ENCODE measurements at regions of chr11 and their contacts with region 1.

Region 1: GRCh38 chr11:96342961-96343711 is at the start of gene MAML2:
- DNase-seq: peak; percentile 93
- H3K4me3 Mint-ChIP-seq: peak within 1 kb of the TSS; percentile 96
- H3K27ac Mint-ChIP-seq: peak within 1 kb of the TSS; percentile 88
- H3K4me1 Mint-ChIP-seq: peaks cover 25% of the 10 kb centered on the region
- H3K27me3 Mint-ChIP-seq: no peaks in the 10 kb centered on the region
- total RNA-seq, gene MAML2: 23.4 to 27.2 TPM

Region 2: GRCh38 chr11:95884376-95884775 is 458.8 kb before region 1 on chr11:
- CTCF ChIA-PET with region 1: no interaction called
- POLR2A ChIA-PET with region 1: no interaction called
- DNase-seq: no peak
- H3K4me3 Mint-ChIP-seq: no peak overlapping the region
- H3K27ac Mint-ChIP-seq: no peak overlapping the region
- H3K4me1 Mint-ChIP-seq: peaks cover 5% of the 10 kb centered on the region
- H3K27me3 Mint-ChIP-seq: no peaks in the 10 kb centered on the region

Region 3: DNA sequence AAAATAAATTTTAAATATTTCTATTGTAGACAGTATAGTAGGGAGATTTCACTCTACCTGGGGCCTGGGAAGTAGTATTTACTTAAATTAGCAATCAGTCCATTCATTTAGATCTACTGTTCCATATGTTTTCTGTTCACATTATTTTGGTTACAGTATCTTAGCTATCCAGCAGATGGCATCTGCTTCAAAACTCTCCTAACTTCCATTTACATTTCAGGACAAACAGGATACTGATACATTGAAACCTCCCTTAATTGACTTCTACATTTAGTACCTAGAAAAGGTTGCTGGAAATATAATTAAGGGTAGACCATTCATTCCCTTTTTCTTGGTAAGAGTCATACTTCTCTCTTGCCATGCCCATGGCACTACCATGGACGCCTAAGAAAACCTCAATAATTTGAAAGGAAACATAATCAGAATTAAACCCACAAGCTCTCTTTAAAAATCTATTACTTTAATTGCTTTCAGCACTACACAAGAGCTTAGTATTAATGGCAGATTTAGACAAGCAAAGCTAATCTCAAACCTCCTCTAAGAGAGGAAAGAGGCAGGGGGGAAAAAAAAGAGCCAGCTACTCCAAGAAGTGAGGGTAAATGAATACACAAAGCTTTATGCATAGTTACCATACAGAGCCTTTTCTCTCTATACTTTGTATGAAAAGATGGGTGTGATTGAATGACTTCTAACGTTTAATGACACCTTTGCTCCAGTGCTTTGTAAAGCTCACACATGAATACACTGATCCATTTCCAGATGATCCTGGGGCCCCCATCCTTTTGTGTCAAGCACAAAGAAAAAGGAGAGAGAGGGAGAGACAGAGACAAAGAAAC is 288.0 kb before region 1 on chr11:
- CTCF ChIA-PET with region 1: interaction called, 17 read pairs
- POLR2A ChIA-PET with region 1: no interaction called
- DNase-seq: no peak
- H3K4me3 Mint-ChIP-seq: no peak overlapping the region
- H3K27ac Mint-ChIP-seq: no peak overlapping the region
- H3K4me1 Mint-ChIP-seq: peaks cover 59% of the 10 kb centered on the region
- H3K27me3 Mint-ChIP-seq: no peaks in the 10 kb centered on the region

Region 4: DNA sequence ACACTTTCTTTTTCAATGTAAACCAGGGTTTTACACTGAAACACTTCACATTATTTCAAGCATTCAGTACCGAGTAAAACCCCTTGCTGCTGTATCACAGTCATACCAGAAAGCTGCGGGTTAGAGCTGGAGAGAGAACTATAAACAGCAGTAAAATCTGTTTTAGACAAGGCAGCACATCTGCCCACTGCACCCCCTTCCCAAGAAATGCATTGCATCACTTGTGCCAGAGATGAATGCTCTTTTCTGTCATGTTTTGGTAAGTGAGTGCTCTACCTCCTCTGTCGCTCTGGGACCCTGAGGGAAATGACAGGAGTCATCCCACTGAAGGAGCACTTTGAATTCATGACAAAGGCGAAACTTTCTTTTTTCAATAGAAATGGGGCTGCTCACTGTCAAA is 107.4 kb before region 1 on chr11:
- CTCF ChIA-PET with region 1: interaction called, 16 read pairs
- POLR2A ChIA-PET with region 1: interaction called, 6 read pairs
- DNase-seq: peak; percentile 50
- H3K4me3 Mint-ChIP-seq: peak overlapping the region; percentile 31
- H3K27ac Mint-ChIP-seq: peak overlapping the region; percentile 82
- H3K4me1 Mint-ChIP-seq: peaks cover 37% of the 10 kb centered on the region
- H3K27me3 Mint-ChIP-seq: no peaks in the 10 kb centered on the region

Region 5: DNA sequence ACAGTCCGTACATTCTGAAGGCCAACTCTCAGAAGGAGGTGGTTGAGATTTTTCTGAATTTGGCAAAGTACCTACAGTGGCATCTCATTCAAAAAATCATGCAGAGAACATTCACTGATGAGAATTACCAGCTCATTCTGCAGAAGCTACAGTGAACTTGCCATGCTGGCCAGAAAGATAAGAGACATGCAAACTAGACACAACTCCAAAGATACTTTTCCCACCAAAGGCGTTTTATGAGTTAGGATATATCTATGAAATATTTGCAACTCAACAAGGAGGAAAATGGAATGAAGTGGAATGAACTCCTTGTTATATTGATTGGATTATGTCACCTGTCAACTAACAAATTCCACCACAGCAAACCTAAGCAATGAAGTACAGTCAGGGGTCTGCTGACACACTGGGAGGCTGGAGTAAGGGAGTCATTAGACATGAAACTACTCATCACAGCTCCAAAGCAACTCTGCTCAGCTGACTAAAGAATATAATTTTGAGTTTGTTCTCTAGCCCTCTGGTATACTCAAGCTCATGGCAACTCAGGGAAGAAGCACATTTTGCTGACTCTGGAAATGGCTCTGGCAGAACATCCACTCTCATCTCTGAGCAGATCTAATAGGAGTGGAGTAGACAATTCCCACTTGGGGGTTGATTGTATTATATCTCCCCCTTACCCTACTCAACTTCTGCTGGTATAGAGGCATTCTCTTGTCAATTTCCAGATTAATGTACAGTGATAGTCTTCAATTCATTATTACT is 23.1 kb before region 1 on chr11:
- CTCF ChIA-PET with region 1: interaction called, 14 read pairs
- POLR2A ChIA-PET with region 1: interaction called, 4 read pairs
- DNase-seq: no peak
- H3K4me3 Mint-ChIP-seq: no peak overlapping the region
- H3K27ac Mint-ChIP-seq: no peak overlapping the region
- H3K4me1 Mint-ChIP-seq: peaks cover 61% of the 10 kb centered on the region
- H3K27me3 Mint-ChIP-seq: no peaks in the 10 kb centered on the region

Region 6: GRCh38 chr11:96357794-96358193 is 14.7 kb after region 1 on chr11:
- CTCF ChIA-PET with region 1: interaction called, 15 read pairs
- POLR2A ChIA-PET with region 1: interaction called, 3 read pairs
- DNase-seq: no peak
- H3K4me3 Mint-ChIP-seq: no peak overlapping the region
- H3K27ac Mint-ChIP-seq: peak overlapping the region; percentile 32
- H3K4me1 Mint-ChIP-seq: peaks cover 20% of the 10 kb centered on the region
- H3K27me3 Mint-ChIP-seq: no peaks in the 10 kb centered on the region

Region 7: DNA sequence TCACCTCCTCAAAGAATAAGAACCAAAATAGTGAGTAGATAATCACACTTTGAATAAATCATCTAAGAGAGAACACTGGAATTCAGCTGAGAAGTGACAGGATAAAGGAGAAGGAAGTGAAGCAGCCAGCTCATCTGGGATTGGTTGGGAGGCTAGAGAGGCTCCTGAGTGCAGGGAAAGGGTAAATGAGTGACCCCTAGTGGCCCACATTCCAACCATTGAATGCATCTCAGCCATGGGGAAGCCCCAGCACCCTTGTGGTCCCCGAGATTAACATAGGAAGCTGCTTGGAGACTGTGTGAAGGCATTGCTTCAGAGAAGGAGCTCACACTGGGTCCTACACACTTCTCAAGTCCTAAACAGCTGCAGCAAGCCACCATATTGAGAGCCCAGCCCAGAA is 128.9 kb after region 1 on chr11:
- CTCF ChIA-PET with region 1: no interaction called
- POLR2A ChIA-PET with region 1: no interaction called
- DNase-seq: no peak
- H3K4me3 Mint-ChIP-seq: no peak overlapping the region
- H3K27ac Mint-ChIP-seq: no peak overlapping the region
- H3K4me1 Mint-ChIP-seq: peaks cover 2% of the 10 kb centered on the region
- H3K27me3 Mint-ChIP-seq: no peaks in the 10 kb centered on the region